PC-3 (cell line): ENCODE measurements at regions of chr6 and their contacts with region 1.

Region 1: DNA sequence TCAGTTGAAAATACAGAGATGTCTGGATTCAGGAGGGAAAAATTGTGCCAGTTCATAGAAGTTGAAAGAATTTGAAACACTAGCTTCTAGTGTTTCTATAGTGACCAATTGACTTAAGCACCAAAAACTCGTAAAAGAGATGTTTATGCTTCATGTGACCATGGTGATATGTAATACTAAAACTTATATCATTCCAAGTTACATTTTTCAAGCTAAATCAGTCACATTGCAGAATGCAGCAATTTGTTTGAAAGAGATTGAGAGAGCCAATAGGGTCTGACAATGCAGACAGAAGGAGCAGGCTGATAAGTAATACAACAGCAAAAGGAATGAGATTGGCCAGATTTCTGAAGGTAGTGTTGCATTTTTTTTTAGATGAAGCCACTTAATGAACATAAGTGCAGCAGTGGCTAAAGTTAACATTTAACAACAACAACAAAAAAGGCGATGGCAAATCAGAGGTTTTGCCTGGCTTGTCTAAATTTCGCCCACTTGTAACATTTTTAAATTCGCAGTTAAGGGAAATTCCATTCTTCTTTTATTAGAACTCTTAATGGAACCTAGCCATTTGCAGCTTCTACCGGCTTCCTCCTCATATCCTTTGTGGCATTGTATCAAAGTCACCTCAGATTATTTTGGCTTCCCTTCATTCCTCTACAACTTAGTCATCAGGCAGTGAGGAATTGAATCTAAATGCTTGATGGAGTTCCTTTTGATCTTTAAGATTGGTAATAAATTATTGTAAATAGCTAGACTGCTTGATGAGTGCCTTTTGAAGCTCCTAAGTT is 484.0 kb upstream of the SOX4 start:
- DNase-seq: peak; percentile 94
- ATAC-seq: peak; percentile 77
- H3K4me3 ChIP-seq: peak overlapping the region; percentile 46
- H3K27ac ChIP-seq: peak overlapping the region; percentile 96
- H3K4me1 ChIP-seq: peaks cover 45% of the 10 kb centered on the region
- H3K27me3 ChIP-seq: no peaks in the 10 kb centered on the region
- CTCF ChIP-seq: no peak

Region 2: GRCh38 chr6:20564269-20564668 is 545.3 kb before region 1 on chr6:
- CTCF ChIA-PET with region 1: no interaction called
- POLR2A ChIA-PET with region 1: no interaction called
- intact Hi-C with region 1: loop called (anchors 5 kb)
- DNase-seq: peak; percentile 67
- ATAC-seq: no peak
- H3K4me3 ChIP-seq: no peak overlapping the region
- H3K27ac ChIP-seq: no peak overlapping the region
- H3K4me1 ChIP-seq: peaks cover 5% of the 10 kb centered on the region
- H3K27me3 ChIP-seq: no peaks in the 10 kb centered on the region
- CTCF ChIP-seq: peak; percentile 78

Region 3: DNA sequence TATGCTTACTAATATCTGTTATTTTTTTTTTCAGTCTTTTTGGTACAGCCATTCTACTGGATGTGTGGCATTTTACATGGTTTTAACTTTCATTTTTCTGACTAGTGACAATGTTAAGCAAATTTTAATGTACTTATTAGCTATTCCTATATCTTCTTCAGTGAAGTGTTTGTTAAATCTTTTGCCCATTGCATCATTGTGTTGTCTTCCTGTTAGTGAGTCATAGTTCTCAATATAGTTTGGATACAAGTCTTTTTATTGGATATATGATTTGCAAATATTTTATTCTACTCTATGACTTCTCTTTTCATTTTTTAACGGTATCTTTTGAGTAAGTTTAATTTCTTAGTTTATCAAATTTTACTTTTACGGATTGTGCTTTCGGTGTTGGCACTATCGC is 56.0 kb before region 1 on chr6:
- CTCF ChIA-PET with region 1: no interaction called
- POLR2A ChIA-PET with region 1: no interaction called
- intact Hi-C with region 1: loop called (anchors 10 kb)
- DNase-seq: peak; percentile 45
- ATAC-seq: peak; percentile 56
- H3K4me3 ChIP-seq: no peak overlapping the region
- H3K27ac ChIP-seq: peak overlapping the region; percentile 16
- H3K4me1 ChIP-seq: peaks cover 22% of the 10 kb centered on the region
- H3K27me3 ChIP-seq: no peaks in the 10 kb centered on the region
- CTCF ChIP-seq: no peak

Region 4: GRCh38 chr6:21208081-21208795 is 98.7 kb after region 1 on chr6:
- CTCF ChIA-PET with region 1: no interaction called
- POLR2A ChIA-PET with region 1: no interaction called
- intact Hi-C with region 1: loop called (anchors 10 kb)
- DNase-seq: no peak
- ATAC-seq: no peak
- H3K4me3 ChIP-seq: no peak overlapping the region
- H3K27ac ChIP-seq: no peak overlapping the region
- H3K4me1 ChIP-seq: no peaks in the 10 kb centered on the region
- H3K27me3 ChIP-seq: no peaks in the 10 kb centered on the region
- CTCF ChIP-seq: no peak

Region 5: GRCh38 chr6:21426832-21427490 is 317.4 kb after region 1 on chr6:
- CTCF ChIA-PET with region 1: no interaction called
- POLR2A ChIA-PET with region 1: no interaction called
- intact Hi-C with region 1: no loop called
- DNase-seq: peak; percentile 29
- ATAC-seq: no peak
- H3K4me3 ChIP-seq: no peak overlapping the region
- H3K27ac ChIP-seq: no peak overlapping the region
- H3K4me1 ChIP-seq: no peaks in the 10 kb centered on the region
- H3K27me3 ChIP-seq: no peaks in the 10 kb centered on the region
- CTCF ChIP-seq: no peak